Uterus (tissue), 4 donors: ENCODE measurements at regions of chr16 and their contacts with region 1.

Region 1: GRCh38 chr16:89945670-89946069 is 2.9 kb upstream of the DEF8 start:
- DNase-seq: no peak
- H3K4me3 ChIP-seq: no peak overlapping the region
- H3K27ac ChIP-seq: no peak overlapping the region
- H3K4me1 ChIP-seq: peaks cover 0 to 9% of the 10 kb centered on the region in 2 donors
- H3K27me3 ChIP-seq: no peaks in the 10 kb centered on the region
- CTCF ChIP-seq: no peak
- POLR2A ChIP-seq: no peak

Region 2: DNA sequence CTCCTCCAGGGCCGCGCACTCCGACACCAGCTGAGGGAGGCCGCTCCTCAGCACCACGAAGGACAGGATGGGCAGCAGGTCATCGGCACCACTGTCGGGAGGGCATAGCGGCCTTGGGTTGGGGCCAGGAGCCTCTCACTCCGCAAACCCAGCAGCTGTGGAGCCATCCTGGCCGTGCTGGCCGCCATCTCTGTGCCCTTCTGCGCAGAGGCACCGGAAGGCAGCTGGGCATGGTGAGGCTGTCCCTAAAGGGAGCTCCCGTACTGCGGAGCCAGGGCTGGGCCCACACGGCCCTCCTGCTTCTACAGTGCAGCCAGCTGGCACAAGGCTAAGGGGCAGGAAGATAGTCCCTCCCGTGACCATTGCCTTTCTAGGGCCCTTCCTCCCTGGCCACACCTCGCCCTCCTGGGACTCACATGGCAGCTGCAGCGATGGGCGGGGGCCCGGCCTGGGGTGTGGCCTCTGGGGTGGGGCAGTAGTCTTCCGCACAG is 237.2 kb before region 1 on chr16:
- intact Hi-C with region 1: loop called (anchors 5 kb)
- DNase-seq: no peak
- H3K4me3 ChIP-seq: no peak overlapping the region
- H3K27ac ChIP-seq: no peak overlapping the region
- H3K4me1 ChIP-seq: no peaks in the 10 kb centered on the region
- H3K27me3 ChIP-seq: no peaks in the 10 kb centered on the region
- CTCF ChIP-seq: no peak
- POLR2A ChIP-seq: no peak